Activated naive CD4-positive, alpha-beta T cell treated with anti-CD3 and anti-CD28 coated beads, Interleukin-2, amount 10 ng/mL, durations not matched to agents 7 days and 5 days (primary cell): ENCODE measurements at regions of chr10 and their contacts with region 1.

Region 1: GRCh38 chr10:62637249-62638061 is 167.1 kb upstream of the ADO start:
- DNase-seq: peak; percentile 79
- H3K4me3 Mint-ChIP-seq: no peak overlapping the region
- H3K27ac Mint-ChIP-seq: no peak overlapping the region
- H3K4me1 Mint-ChIP-seq: peaks cover 24% of the 10 kb centered on the region
- H3K27me3 Mint-ChIP-seq: no peaks in the 10 kb centered on the region

Region 2: GRCh38 chr10:62554632-62555199 is 82.7 kb before region 1 on chr10:
- CTCF ChIA-PET with region 1: no interaction called
- DNase-seq: no peak
- H3K4me3 Mint-ChIP-seq: no peak overlapping the region
- H3K27ac Mint-ChIP-seq: no peak overlapping the region
- H3K4me1 Mint-ChIP-seq: no peaks in the 10 kb centered on the region
- H3K27me3 Mint-ChIP-seq: peaks cover 27% of the 10 kb centered on the region

Region 3: DNA sequence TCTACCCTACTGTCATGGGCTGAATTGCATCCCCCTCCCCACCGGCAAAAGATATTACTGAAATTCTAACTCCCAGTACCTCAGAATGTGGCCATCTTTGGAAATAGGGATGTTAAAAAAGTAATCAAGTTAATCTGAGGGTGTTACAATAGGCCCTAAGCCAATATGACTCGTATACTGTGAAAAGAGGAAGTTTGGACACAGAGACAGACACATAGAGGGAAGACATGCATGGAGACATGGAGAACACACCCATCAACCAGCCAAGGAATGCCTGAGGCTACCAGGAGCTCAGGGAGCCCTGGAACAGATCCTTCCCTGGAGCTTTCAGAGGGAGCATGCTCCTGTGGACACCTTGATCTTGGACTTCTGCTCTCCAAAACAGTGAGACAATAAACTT is 28.8 kb after region 1 on chr10:
- CTCF ChIA-PET with region 1: no interaction called
- DNase-seq: no peak
- H3K4me3 Mint-ChIP-seq: no peak overlapping the region
- H3K27ac Mint-ChIP-seq: no peak overlapping the region
- H3K4me1 Mint-ChIP-seq: no peaks in the 10 kb centered on the region
- H3K27me3 Mint-ChIP-seq: peaks cover 23% of the 10 kb centered on the region

Region 4: GRCh38 chr10:62681211-62681940 is 43.9 kb after region 1 on chr10:
- CTCF ChIA-PET with region 1: interaction called, 10 read pairs
- DNase-seq: peak; percentile 57
- H3K4me3 Mint-ChIP-seq: no peak overlapping the region
- H3K27ac Mint-ChIP-seq: no peak overlapping the region
- H3K4me1 Mint-ChIP-seq: peaks cover 15% of the 10 kb centered on the region
- H3K27me3 Mint-ChIP-seq: peaks cover 3% of the 10 kb centered on the region

Region 5: DNA sequence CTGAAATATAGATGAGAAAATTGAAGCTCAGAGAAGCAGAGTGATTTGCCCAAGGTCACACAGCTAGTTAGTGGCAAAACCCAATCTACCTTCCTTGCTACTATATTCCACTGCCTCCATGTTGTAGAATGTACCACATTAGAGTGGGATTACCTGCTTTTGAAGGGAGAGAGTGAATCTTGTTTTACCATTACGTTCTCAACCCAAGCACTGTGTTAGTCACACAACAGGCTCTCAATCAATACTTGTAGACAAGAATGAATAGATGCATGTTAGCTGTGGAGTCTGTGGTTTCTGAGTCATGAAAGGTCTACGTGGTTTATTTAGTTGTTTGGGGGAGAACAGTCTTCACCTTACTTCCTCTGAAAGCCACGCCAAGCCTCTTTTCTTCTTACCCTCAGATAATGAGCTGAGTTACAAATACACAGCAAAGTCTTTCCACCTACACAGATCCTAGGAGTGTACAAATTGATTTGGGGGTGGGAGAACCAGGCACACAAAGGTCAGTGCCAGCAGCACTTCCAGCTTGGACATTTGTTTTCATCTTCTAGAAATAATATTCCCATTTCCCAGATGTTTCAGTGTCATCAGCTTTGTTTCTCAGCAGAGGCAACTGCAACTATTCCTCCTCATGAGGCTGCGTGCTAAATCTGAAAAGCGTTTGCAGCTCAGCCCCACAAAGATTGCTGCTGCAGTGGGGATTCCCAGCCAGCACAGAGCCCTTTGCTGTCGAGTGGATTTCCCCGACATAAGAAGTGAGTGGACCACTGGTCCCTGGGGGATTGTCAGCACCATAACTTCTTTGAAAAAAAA is 95.6 kb after region 1 on chr10:
- CTCF ChIA-PET with region 1: interaction called, 14 read pairs
- DNase-seq: peak; percentile 54
- H3K4me3 Mint-ChIP-seq: peak overlapping the region; percentile 56
- H3K27ac Mint-ChIP-seq: no peak overlapping the region
- H3K4me1 Mint-ChIP-seq: peaks cover 12% of the 10 kb centered on the region
- H3K27me3 Mint-ChIP-seq: peaks cover 17% of the 10 kb centered on the region